ENCODE measurements at regions of chr1 and their contacts with region 1.

Region 1: GRCh38 chr1:45521398-45522323 is at the start of gene PRDX1:
- DNase-seq: peak; percentile 88 to 99
- H3K4me3 ChIP-seq: peak within 1 kb of the TSS; percentile 81
- H3K27ac ChIP-seq: peak within 1 kb of the TSS; percentile 98
- H3K4me1 ChIP-seq: peaks cover 67% of the 10 kb centered on the region
- H3K27me3 ChIP-seq: no peaks in the 10 kb centered on the region
- CTCF ChIP-seq: no peak
- total RNA-seq, gene PRDX1: 1,455 and 1,838 TPM in 2 replicates

Region 2: DNA sequence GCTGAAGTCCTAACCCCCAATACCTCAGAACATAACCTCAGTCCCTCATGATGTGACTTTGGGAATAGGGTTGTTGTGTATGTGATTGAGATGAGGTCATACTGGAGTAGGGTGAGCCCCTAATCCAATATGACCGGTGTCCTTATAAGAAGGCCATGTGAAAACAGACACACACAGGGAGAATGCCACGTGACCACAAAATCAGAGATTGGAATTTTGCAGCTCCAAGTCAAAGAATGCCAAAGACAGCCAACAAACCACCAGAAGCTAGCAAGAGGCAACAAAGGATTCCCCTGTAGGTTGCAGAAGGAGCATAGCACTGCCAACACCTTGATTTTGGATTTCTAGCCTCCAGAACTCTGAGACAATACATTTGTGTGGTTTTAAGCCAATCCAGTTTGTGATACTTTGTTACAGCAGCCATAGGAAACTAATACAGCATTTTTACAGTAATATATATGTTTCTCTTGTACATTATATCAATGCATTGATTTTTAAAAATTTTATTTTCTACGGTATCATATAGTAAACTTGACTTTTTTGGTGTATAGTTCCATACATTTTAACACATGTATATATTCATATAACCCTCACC is 320.7 kb before region 1 on chr1:
- CTCF ChIA-PET with region 1: no interaction called
- POLR2A ChIA-PET with region 1: no interaction called
- intact Hi-C with region 1: no loop called
- DNase-seq: no peak
- H3K4me3 ChIP-seq: no peak overlapping the region
- H3K27ac ChIP-seq: no peak overlapping the region
- H3K4me1 ChIP-seq: peaks cover 5% of the 10 kb centered on the region; the same call in 1 of the 2 replicates
- H3K27me3 ChIP-seq: no peaks in the 10 kb centered on the region
- CTCF ChIP-seq: no peak

Region 3: GRCh38 chr1:45499415-45499769 is 22.3 kb before region 1 on chr1:
- CTCF ChIA-PET with region 1: no interaction called
- POLR2A ChIA-PET with region 1: interaction called, 20 read pairs
- intact Hi-C with region 1: no loop called
- DNase-seq: no peak
- H3K4me3 ChIP-seq: peak overlapping the region; percentile 79
- H3K27ac ChIP-seq: no peak overlapping the region
- H3K4me1 ChIP-seq: peaks cover 18% of the 10 kb centered on the region
- H3K27me3 ChIP-seq: no peaks in the 10 kb centered on the region
- CTCF ChIP-seq: no peak

Region 4: DNA sequence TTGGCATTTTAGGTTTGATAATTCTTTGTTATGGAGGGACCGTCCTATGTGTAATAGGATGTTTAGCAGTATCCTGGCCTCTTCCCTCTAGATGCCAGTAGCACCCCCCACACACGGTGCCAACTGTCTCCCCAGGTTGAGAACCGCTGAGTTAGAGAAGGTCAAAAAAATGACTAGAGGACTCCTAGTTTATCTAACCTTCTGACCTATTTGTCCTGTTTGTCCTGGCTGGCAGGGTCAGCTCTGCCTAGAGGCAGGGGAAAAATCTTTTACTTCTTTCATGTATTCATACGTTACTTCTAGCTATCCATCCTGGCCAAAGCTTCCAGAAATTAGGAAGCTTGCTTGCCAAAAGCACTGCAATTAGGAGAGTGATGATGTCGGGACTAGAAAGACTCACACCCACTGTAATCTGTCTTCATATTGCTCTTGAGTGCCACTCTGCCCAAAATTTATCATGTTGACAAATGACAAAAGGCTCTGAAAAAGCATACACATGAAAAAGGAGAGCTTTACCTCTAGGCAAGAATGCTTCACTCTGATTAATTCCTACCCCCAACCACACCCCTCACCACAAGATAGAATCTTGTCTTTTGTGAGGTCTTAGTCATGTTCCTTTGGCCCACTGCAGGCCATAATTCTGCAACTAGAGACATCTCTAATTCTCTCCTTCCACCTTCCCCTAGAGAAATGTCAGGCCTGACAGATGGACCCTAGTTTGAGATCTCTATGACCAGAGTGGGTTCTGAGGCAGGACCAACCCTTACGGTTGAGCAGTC is 14.5 kb after region 1 on chr1:
- CTCF ChIA-PET with region 1: no interaction called
- POLR2A ChIA-PET with region 1: interaction called, 10 read pairs
- intact Hi-C with region 1: no loop called
- DNase-seq: no peak
- H3K4me3 ChIP-seq: no peak overlapping the region
- H3K27ac ChIP-seq: no peak overlapping the region
- H3K4me1 ChIP-seq: peaks cover 13% of the 10 kb centered on the region
- H3K27me3 ChIP-seq: no peaks in the 10 kb centered on the region
- CTCF ChIP-seq: no peak

Region 5: GRCh38 chr1:45542591-45542990 is 20.9 kb after region 1 on chr1:
- CTCF ChIA-PET with region 1: interaction called, 3 read pairs
- POLR2A ChIA-PET with region 1: interaction called, 53 read pairs
- intact Hi-C with region 1: no loop called
- DNase-seq: no peak
- H3K4me3 ChIP-seq: no peak overlapping the region
- H3K27ac ChIP-seq: no peak overlapping the region
- H3K4me1 ChIP-seq: peaks cover 14% of the 10 kb centered on the region; the same call in 1 of the 2 replicates
- H3K27me3 ChIP-seq: no peaks in the 10 kb centered on the region
- CTCF ChIP-seq: no peak

Region 6: GRCh38 chr1:45550401-45551351 is 29.0 kb after region 1 on chr1 and contains the start of gene AKR1A1:
- CTCF ChIA-PET with region 1: interaction called, 3 read pairs
- POLR2A ChIA-PET with region 1: interaction called, 18 read pairs
- intact Hi-C with region 1: loop called (anchors 1 kb)
- DNase-seq: peak; percentile 81 to 96
- H3K4me3 ChIP-seq: peak within 1 kb of the TSS; percentile 89
- H3K27ac ChIP-seq: peak within 1 kb of the TSS; percentile 86
- H3K4me1 ChIP-seq: peaks cover 24% of the 10 kb centered on the region
- H3K27me3 ChIP-seq: no peaks in the 10 kb centered on the region
- CTCF ChIP-seq: no peak
- total RNA-seq, gene AKR1A1: 202 and 277 TPM in 2 replicates

Region 7: DNA sequence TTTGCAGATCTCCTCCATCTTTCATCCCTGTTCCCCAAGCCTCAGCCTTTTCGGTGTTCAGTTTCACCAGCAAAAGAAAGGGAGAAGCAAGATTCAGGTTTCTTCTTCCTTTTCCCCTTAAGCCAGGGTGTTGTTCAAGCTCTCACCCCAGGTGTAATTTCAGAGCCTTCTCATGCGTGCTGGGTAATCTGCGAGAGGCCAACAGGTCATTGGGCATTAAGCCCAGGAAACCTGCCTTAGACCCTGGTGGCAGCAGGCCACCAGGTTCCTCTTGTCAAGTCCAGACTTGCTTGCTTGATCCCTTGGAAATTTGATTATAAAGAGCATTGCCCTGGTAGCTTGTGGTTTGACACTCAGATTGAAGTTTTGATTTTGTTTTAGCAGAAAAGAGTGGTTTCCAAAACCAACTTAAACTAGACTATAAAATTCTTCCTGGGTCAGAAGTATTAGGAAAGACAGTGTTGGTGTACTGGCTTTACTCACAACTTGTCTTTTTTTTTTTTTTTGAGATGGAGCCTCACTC is 35.8 kb after region 1 on chr1:
- CTCF ChIA-PET with region 1: interaction called, 3 read pairs
- POLR2A ChIA-PET with region 1: interaction called, 17 read pairs
- intact Hi-C with region 1: loop called (anchors 1 kb)
- DNase-seq: peak; percentile 59 to 86
- H3K4me3 ChIP-seq: no peak overlapping the region
- H3K27ac ChIP-seq: no peak overlapping the region
- H3K4me1 ChIP-seq: peaks cover 2% of the 10 kb centered on the region
- H3K27me3 ChIP-seq: no peaks in the 10 kb centered on the region
- CTCF ChIP-seq: no peak

Region 8: DNA sequence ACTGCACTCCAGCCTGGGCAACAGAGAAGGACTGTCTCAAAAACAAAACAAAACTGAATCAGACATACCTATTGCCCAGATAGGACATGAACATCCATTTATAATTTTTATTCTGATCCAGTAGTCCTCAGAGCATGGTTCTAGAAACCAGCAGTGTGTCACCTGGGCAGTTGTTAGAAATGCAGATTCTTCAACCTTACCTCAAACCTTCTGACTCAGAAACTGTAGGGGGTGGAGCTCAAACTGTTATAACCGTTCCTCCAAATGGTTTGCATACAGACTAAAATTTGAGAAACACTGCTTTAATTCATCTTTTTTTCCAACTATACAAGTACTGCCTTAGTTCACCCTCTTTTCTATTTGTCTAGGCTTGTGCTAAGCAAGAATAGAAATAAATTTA is 68.2 kb after region 1 on chr1:
- CTCF ChIA-PET with region 1: no interaction called
- POLR2A ChIA-PET with region 1: interaction called, 23 read pairs
- intact Hi-C with region 1: no loop called
- DNase-seq: no peak
- H3K4me3 ChIP-seq: no peak overlapping the region
- H3K27ac ChIP-seq: no peak overlapping the region
- H3K4me1 ChIP-seq: peaks cover 17% of the 10 kb centered on the region
- H3K27me3 ChIP-seq: no peaks in the 10 kb centered on the region
- CTCF ChIP-seq: no peak

Measured in PC-9 (cell line).